ENCODE measurements at regions of chr19 and their contacts with region 1.

Region 1: GRCh38 chr19:46503848-46504453 is 8.3 kb upstream of the PNMA8B start:
- DNase-seq: no peak
- H3K4me3 ChIP-seq: no peak overlapping the region
- H3K27ac ChIP-seq: no peak overlapping the region
- H3K4me1 ChIP-seq: no peaks in the 10 kb centered on the region
- H3K27me3 ChIP-seq: no peaks in the 10 kb centered on the region
- CTCF ChIP-seq: no peak
- POLR2A ChIP-seq: no peak

Region 2: GRCh38 chr19:46288896-46289588 is 214.9 kb before region 1 on chr19:
- intact Hi-C with region 1: loop called (anchors 10 kb)
- DNase-seq: no peak
- H3K4me3 ChIP-seq: no peak overlapping the region
- H3K27ac ChIP-seq: no peak overlapping the region
- H3K4me1 ChIP-seq: no peaks in the 10 kb centered on the region
- H3K27me3 ChIP-seq: no peaks in the 10 kb centered on the region
- CTCF ChIP-seq: no peak
- POLR2A ChIP-seq: no peak